Activated CD4-positive, alpha-beta T cell treated with anti-CD3 and anti-CD28 coated beads, Interleukin-2, amount 10 ng/mL, durations not matched to agents 24 days and 14 days (primary cell): ENCODE measurements at regions of chr16 and their contacts with region 1.

Region 1: GRCh38 chr16:75647492-75648264 is at the starts of genes KARS1 and TERF2IP:
- DNase-seq: peak; percentile 99
- H3K4me3 Mint-ChIP-seq: peak within 1 kb of the TSS; percentile 89
- H3K27ac Mint-ChIP-seq: peak within 1 kb of the TSS; percentile 97
- H3K4me1 Mint-ChIP-seq: peaks cover 42% of the 10 kb centered on the region
- H3K27me3 Mint-ChIP-seq: no peaks in the 10 kb centered on the region
- total RNA-seq, gene KARS1: 285 and 296 TPM in 2 replicates
- total RNA-seq, gene TERF2IP: 86.8 and 89.1 TPM in 2 replicates

Region 2: GRCh38 chr16:74695450-74696422 is 951.9 kb before region 1 on chr16:
- intact Hi-C with region 1: loop called (anchors 5 kb)
- DNase-seq: peak; percentile 92
- H3K4me3 Mint-ChIP-seq: peak overlapping the region; percentile 82
- H3K27ac Mint-ChIP-seq: peak overlapping the region; percentile 86
- H3K4me1 Mint-ChIP-seq: peaks cover 34% of the 10 kb centered on the region
- H3K27me3 Mint-ChIP-seq: no peaks in the 10 kb centered on the region

Region 3: DNA sequence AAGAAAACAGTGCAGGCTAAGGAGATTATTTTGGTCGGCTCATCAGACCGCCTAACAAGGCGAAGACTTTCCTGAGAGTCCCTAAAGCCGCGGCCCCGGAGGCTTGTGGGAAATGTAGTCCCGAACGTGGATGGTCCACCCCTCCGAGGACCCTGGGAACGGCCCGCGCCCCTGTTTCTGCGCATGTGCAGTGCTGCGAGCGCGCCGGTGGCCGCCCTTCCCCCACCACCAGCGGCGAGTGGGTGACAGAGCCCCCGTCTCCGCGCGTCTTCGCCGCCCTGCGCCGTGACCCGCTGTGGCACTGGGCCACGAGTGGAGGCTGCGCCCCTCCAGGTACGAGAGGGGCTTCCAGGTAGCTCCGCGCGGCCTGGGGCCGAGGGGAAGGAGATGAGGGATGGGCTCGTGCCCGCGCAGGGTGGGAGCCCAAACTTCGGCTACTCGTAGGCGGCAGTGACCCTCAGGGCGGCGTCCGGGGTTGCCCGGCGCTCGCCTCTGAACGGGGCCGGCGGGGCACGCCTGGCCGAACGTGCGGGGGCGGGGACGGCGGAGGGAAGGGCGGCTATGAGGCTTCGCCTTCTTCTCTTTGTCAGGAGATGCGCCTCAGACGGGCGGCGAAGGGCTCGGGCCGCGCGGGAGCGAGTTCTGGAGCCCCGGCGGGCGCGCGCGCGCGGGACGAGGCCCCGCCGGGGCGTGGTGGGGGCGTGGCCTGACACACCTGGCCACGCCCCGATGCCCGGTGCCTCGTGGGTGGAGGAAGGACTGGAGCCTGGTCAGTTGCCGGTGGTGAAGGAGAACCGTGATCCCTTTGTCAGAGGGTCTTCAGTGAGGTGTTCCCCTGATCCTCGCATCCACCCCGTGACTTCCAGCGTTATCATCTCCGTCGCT is 499.1 kb before region 1 on chr16 and contains the start of gene ZFP1:
- intact Hi-C with region 1: loop called (anchors 5 kb)
- DNase-seq: peak; percentile 98
- H3K4me3 Mint-ChIP-seq: peak within 1 kb of the TSS; percentile 92
- H3K27ac Mint-ChIP-seq: peak within 1 kb of the TSS; percentile 87
- H3K4me1 Mint-ChIP-seq: peaks cover 19% of the 10 kb centered on the region
- H3K27me3 Mint-ChIP-seq: no peaks in the 10 kb centered on the region
- total RNA-seq, gene ZFP1: 14.3 and 16.5 TPM in 2 replicates

Region 4: GRCh38 chr16:75244844-75245758 is 402.6 kb before region 1 on chr16:
- intact Hi-C with region 1: no loop called
- DNase-seq: no peak
- H3K4me3 Mint-ChIP-seq: no peak overlapping the region
- H3K27ac Mint-ChIP-seq: no peak overlapping the region
- H3K4me1 Mint-ChIP-seq: peaks cover 2% of the 10 kb centered on the region
- H3K27me3 Mint-ChIP-seq: peaks cover 24% of the 10 kb centered on the region

Region 5: DNA sequence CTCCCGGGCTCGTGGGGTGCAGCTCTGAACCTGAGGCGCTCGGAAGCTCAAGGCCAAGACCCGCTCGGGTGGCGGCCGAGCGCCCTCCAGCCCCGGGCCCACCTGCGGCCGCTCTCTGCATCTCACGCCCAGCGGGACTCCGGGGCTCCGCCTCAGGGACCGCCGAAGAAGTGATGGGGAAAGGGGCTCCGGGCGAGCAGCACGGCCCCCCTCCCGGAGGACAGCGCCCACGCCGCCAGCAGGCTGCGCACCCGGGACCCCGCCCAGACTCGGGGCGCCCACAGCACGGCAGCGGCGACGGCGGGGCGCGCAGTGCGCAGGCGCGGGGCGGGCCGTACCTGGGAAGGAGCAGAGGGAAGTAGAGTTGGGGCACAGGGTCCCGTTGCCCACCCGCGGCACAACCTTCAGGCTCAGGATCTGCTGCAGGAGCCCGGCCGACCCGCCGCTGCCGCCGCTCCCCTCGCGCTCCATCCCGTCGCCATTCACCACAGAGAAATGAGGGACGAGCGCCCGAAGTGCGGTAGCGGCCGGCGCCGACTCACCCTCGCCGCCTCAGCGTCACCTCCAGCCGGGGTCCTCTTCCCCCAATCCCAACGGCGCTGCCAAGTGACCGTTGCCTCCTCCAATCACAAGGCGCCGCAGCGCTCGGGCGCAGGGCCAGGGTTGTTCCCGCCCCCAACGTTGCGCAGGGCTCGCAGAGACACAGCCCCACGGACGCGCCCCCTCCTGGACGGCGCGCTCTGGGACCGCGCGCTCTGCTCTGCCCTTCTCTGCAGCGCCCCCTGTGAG is 183.4 kb before region 1 on chr16 and contains the start of gene TMEM170A:
- intact Hi-C with region 1: loop called (anchors 1 kb)
- DNase-seq: peak; percentile 100
- H3K4me3 Mint-ChIP-seq: peak within 1 kb of the TSS; percentile 89
- H3K27ac Mint-ChIP-seq: peak within 1 kb of the TSS; percentile 95
- H3K4me1 Mint-ChIP-seq: peaks cover 38% of the 10 kb centered on the region
- H3K27me3 Mint-ChIP-seq: peaks cover 2% of the 10 kb centered on the region
- total RNA-seq, gene TMEM170A: 39.1 and 46.0 TPM in 2 replicates

Region 6: GRCh38 chr16:75555707-75556430 is 91.8 kb before region 1 on chr16 and contains the start of gene TMEM231:
- intact Hi-C with region 1: loop called (anchors 2 kb)
- DNase-seq: peak; percentile 99
- H3K4me3 Mint-ChIP-seq: peak within 1 kb of the TSS; percentile 92
- H3K27ac Mint-ChIP-seq: peak within 1 kb of the TSS; percentile 90
- H3K4me1 Mint-ChIP-seq: peaks cover 8% of the 10 kb centered on the region
- H3K27me3 Mint-ChIP-seq: peaks cover 20% of the 10 kb centered on the region
- total RNA-seq, gene TMEM231: 4.0 and 4.4 TPM in 2 replicates

Region 7: GRCh38 chr16:75622761-75623605 is 24.7 kb before region 1 on chr16 and contains the start of gene ADAT1:
- intact Hi-C with region 1: loop called (anchors 1 kb)
- DNase-seq: peak; percentile 99
- H3K4me3 Mint-ChIP-seq: peak within 1 kb of the TSS; percentile 97
- H3K27ac Mint-ChIP-seq: peak within 1 kb of the TSS; percentile 97
- H3K4me1 Mint-ChIP-seq: peaks cover 31% of the 10 kb centered on the region
- H3K27me3 Mint-ChIP-seq: no peaks in the 10 kb centered on the region
- total RNA-seq, gene ADAT1: 58.6 and 64.4 TPM in 2 replicates

Region 8: GRCh38 chr16:77190478-77191258 is 1543.0 kb after region 1 on chr16 and contains the start of gene MON1B:
- intact Hi-C with region 1: loop called (anchors 1 kb)
- DNase-seq: peak; percentile 98
- H3K4me3 Mint-ChIP-seq: peak within 1 kb of the TSS; percentile 97
- H3K27ac Mint-ChIP-seq: peak within 1 kb of the TSS; percentile 99
- H3K4me1 Mint-ChIP-seq: peaks cover 36% of the 10 kb centered on the region
- H3K27me3 Mint-ChIP-seq: peaks cover 10% of the 10 kb centered on the region
- total RNA-seq, gene MON1B: 65.7 and 69.3 TPM in 2 replicates